ENCODE measurements at regions of chr15 and their contacts with region 1.

Region 1: GRCh38 chr15:78811124-78811824 is at the start of gene ADAMTS7:
- DNase-seq: peak; percentile 78 to 96
- ATAC-seq: peak; percentile 86 to 92
- H3K4me3 ChIP-seq: peak within 1 kb of the TSS; percentile 74
- H3K27ac ChIP-seq: peak within 1 kb of the TSS; percentile 69 to 84
- H3K4me1 ChIP-seq: peaks cover 4% of the 10 kb centered on the region; the same call in 2 of the 3 replicates
- CTCF ChIP-seq: peak; percentile 86
- EP300 ChIP-seq: no peak; a peak in 1 of 5 replicates
- POLR2A ChIP-seq: peak; percentile 4; the same call in 1 of the 2 replicates
- RAD21 ChIP-seq: peak in 1 of 2 experiments; percentile 50; a peak in 3 of 5 replicates
- polyA plus RNA-seq, gene ADAMTS7: 1.5 and 2.0 TPM in 2 replicates

Region 2: GRCh38 chr15:78788016-78788660 is 23.1 kb before region 1 on chr15:
- CTCF ChIA-PET with region 1: interaction called, 85 read pairs
- POLR2A ChIA-PET with region 1: interaction called, 3 read pairs
- DNase-seq: no peak
- ATAC-seq: 0 out of 6 replicates have a peak, but pooled peaks of 1 of the 2 experiments have one; percentile 24
- H3K4me3 ChIP-seq: no peak overlapping the region
- H3K27ac ChIP-seq: no peak overlapping the region
- H3K4me1 ChIP-seq: no peaks in the 10 kb centered on the region
- CTCF ChIP-seq: no peak
- EP300 ChIP-seq: no peak
- POLR2A ChIP-seq: 0 out of 2 replicates have a peak, but pooled peaks have one; percentile 13
- RAD21 ChIP-seq: no peak

Region 3: GRCh38 chr15:78822514-78822913 is 11.2 kb after region 1 on chr15:
- CTCF ChIA-PET with region 1: interaction called, 15 read pairs
- POLR2A ChIA-PET with region 1: interaction called, 3 read pairs
- DNase-seq: no peak
- ATAC-seq: no peak
- H3K4me3 ChIP-seq: no peak overlapping the region
- H3K27ac ChIP-seq: no peak overlapping the region
- H3K4me1 ChIP-seq: no peaks in the 10 kb centered on the region
- CTCF ChIP-seq: no peak
- EP300 ChIP-seq: no peak
- POLR2A ChIP-seq: no peak
- RAD21 ChIP-seq: no peak

Region 4: GRCh38 chr15:78859971-78860732 is 48.9 kb after region 1 on chr15:
- CTCF ChIA-PET with region 1: interaction called, 17 read pairs
- POLR2A ChIA-PET with region 1: interaction called, 3 read pairs
- DNase-seq: peak; percentile 96
- ATAC-seq: peak; percentile 97 to 98
- H3K4me3 ChIP-seq: peak overlapping the region; percentile 59
- H3K27ac ChIP-seq: peak overlapping the region; percentile 82 to 88
- H3K4me1 ChIP-seq: no peaks in the 10 kb centered on the region
- CTCF ChIP-seq: peak; percentile 91
- EP300 ChIP-seq: no peak
- POLR2A ChIP-seq: peak; percentile 32; the same call in 1 of the 2 replicates
- RAD21 ChIP-seq: peak; percentile 34 to 54; a peak in 4 of 5 replicates

Region 5: DNA sequence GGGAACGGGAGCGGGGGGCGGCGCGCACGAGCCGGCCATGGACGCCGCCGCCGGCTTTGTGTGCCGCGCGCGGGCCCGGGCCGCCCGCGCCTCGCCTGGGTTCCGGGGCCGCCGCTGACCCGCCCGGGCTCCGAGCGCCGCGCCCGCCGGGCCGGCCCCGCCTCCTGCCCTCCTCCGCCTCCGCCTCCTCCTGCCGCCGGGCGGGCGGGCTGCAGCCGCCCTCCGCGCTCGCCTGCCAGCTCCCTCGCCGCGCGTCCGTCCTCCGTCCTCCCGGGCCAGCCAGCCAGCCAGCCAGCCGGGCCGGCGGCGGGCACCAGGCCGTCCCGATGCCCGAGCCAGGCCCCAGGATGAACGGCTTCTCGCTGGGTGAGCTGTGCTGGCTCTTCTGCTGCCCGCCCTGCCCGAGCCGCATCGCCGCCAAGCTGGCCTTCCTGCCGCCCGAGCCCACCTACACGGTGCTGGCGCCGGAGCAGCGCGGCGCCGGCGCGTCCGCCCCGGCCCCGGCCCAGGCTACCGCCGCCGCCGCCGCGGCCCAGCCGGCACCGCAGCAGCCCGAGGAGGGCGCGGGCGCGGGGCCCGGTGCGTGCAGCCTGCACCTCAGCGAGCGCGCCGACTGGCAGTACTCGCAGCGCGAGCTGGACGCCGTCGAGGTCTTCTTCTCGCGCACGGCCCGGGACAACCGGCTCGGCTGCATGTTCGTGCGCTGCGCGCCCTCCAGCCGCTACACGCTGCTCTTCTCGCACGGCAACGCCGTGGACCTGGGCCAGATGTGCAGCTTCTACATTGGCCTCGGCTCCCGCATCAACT is 1884.0 kb after region 1 on chr15 and contains the start of gene ABHD17C:
- CTCF ChIA-PET with region 1: no interaction called
- POLR2A ChIA-PET with region 1: no interaction called
- DNase-seq: peak; percentile 60 to 68
- ATAC-seq: peak; percentile 73 to 84
- H3K4me3 ChIP-seq: peak within 1 kb of the TSS; percentile 79
- H3K27ac ChIP-seq: peak within 1 kb of the TSS; percentile 89 to 94
- H3K4me1 ChIP-seq: peaks cover 16% of the 10 kb centered on the region
- CTCF ChIP-seq: no peak
- EP300 ChIP-seq: no peak
- POLR2A ChIP-seq: peak; percentile 71
- RAD21 ChIP-seq: no peak
- polyA plus RNA-seq, gene ABHD17C: 23.7 and 24.9 TPM in 2 replicates

Measured in A549 (cell line).